Endothelial cell of umbilical vein (primary cell): ENCODE measurements at regions of chr9 and their contacts with region 1.

Region 1: GRCh38 chr9:36728651-36729520 is 156.2 kb downstream of the MELK start:
- DNase-seq: peak; percentile 85
- H3K4me3 ChIP-seq: no peak overlapping the region
- H3K27ac ChIP-seq: no peak overlapping the region
- H3K4me1 ChIP-seq: no peaks in the 10 kb centered on the region
- H3K27me3 ChIP-seq: no peaks in the 10 kb centered on the region
- CTCF ChIP-seq: peak; percentile 90 to 94
- POLR2A ChIP-seq: no peak

Region 2: GRCh38 chr9:36597412-36598178 is 131.3 kb before region 1 on chr9:
- CTCF ChIA-PET with region 1: interaction called, 52 read pairs
- POLR2A ChIA-PET with region 1: no interaction called
- dilution Hi-C with region 1: no loop called
- intact Hi-C with region 1: loop called (anchors 1 kb)
- DNase-seq: peak; percentile 55
- H3K4me3 ChIP-seq: no peak overlapping the region
- H3K27ac ChIP-seq: no peak overlapping the region
- H3K4me1 ChIP-seq: no peaks in the 10 kb centered on the region
- H3K27me3 ChIP-seq: no peaks in the 10 kb centered on the region
- CTCF ChIP-seq: peak; percentile 38 to 60
- POLR2A ChIP-seq: no peak

Region 3: GRCh38 chr9:36625006-36625615 is 103.8 kb before region 1 on chr9:
- CTCF ChIA-PET with region 1: interaction called, 281 read pairs
- POLR2A ChIA-PET with region 1: no interaction called
- dilution Hi-C with region 1: no loop called
- intact Hi-C with region 1: no loop called
- DNase-seq: peak; percentile 67
- H3K4me3 ChIP-seq: no peak overlapping the region
- H3K27ac ChIP-seq: peak overlapping the region; percentile 54
- H3K4me1 ChIP-seq: peaks cover 12% of the 10 kb centered on the region
- H3K27me3 ChIP-seq: no peaks in the 10 kb centered on the region
- CTCF ChIP-seq: no peak
- POLR2A ChIP-seq: no peak

Region 4: GRCh38 chr9:36632892-36633291 is 96.0 kb before region 1 on chr9:
- CTCF ChIA-PET with region 1: interaction called, 281 read pairs
- POLR2A ChIA-PET with region 1: interaction called, 9 read pairs
- dilution Hi-C with region 1: no loop called
- intact Hi-C with region 1: loop called (anchors 1 kb)
- DNase-seq: peak; percentile 51
- H3K4me3 ChIP-seq: no peak overlapping the region
- H3K27ac ChIP-seq: no peak overlapping the region
- H3K4me1 ChIP-seq: no peaks in the 10 kb centered on the region
- H3K27me3 ChIP-seq: no peaks in the 10 kb centered on the region
- CTCF ChIP-seq: peak; percentile 39 to 43
- POLR2A ChIP-seq: no peak

Region 5: DNA sequence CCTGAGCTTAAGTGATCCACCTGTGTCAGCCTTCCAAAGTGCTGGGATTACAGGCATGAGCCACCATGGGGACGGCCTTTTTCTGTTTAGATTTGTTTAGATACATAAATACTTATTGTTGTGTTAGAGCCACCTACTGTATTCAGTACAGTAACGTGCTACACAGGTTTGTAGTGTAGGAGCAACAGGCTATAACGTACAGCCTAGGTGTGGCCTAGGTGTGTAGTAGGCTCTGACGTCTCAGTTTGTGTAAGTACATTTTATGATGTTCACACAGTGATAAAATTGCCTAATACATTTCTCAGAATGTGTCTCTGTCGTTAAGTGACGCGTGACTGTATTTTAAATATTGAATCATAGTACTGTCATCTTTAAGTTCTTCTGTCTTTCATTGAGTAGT is 72.0 kb before region 1 on chr9:
- CTCF ChIA-PET with region 1: interaction called, 11 read pairs
- POLR2A ChIA-PET with region 1: no interaction called
- dilution Hi-C with region 1: no loop called
- intact Hi-C with region 1: no loop called
- DNase-seq: no peak
- H3K4me3 ChIP-seq: no peak overlapping the region
- H3K27ac ChIP-seq: no peak overlapping the region
- H3K4me1 ChIP-seq: no peaks in the 10 kb centered on the region
- H3K27me3 ChIP-seq: no peaks in the 10 kb centered on the region
- CTCF ChIP-seq: no peak
- POLR2A ChIP-seq: no peak

Region 6: DNA sequence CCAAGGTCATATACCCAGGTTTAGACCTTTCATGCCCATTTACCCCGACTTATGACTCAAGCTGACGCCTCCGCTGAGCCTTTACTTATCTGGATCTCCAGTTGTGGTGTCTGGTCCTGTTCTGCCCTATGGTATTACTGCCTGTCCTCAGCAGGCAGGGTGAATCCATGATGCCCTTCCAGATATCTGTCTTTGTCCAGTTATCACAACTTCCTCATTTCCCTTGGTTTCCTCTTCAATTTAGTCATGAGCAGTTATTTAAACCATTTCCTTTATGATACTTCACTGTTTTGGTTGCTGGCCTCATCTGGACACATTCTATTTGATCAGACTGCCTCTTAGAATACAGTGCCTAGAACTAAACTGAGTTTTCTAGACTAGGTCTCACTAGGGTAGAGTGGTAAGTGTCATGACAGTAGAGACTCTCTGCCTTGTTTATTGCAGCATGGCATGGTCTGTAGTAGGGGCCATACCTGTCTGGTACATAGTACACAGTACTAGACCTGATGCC is 62.9 kb before region 1 on chr9:
- CTCF ChIA-PET with region 1: interaction called, 40 read pairs
- POLR2A ChIA-PET with region 1: no interaction called
- dilution Hi-C with region 1: no loop called
- intact Hi-C with region 1: loop called (anchors 5 kb)
- DNase-seq: peak; percentile 92
- H3K4me3 ChIP-seq: peak overlapping the region in 1 of 3 experiments; percentile 25
- H3K27ac ChIP-seq: peak overlapping the region; percentile 93
- H3K4me1 ChIP-seq: peaks cover 35% of the 10 kb centered on the region
- H3K27me3 ChIP-seq: no peaks in the 10 kb centered on the region
- CTCF ChIP-seq: no peak
- POLR2A ChIP-seq: peak; percentile 72